Activated CD8-positive, alpha-beta memory T cell treated with anti-CD3 and anti-CD28 coated beads, Interleukin-2, amount 10 ng/mL, durations not matched to agents 7 days and 5 days (primary cell): ENCODE measurements at regions of chr1 and their contacts with region 1.

Region 1: GRCh38 chr1:22704440-22705067 is 6.1 kb upstream of the EPHB2 start:
- DNase-seq: peak; percentile 84
- ATAC-seq: peak; percentile 94
- H3K4me3 Mint-ChIP-seq: no peak overlapping the region
- H3K27ac Mint-ChIP-seq: no peak overlapping the region
- H3K4me1 Mint-ChIP-seq: peaks cover 9% of the 10 kb centered on the region
- H3K27me3 Mint-ChIP-seq: peaks cover 41% of the 10 kb centered on the region

Region 2: GRCh38 chr1:22861764-22862440 is 157.3 kb after region 1 on chr1:
- CTCF ChIA-PET with region 1: interaction called, 14 read pairs
- DNase-seq: no peak
- ATAC-seq: no peak
- H3K4me3 Mint-ChIP-seq: no peak overlapping the region
- H3K27ac Mint-ChIP-seq: no peak overlapping the region
- H3K4me1 Mint-ChIP-seq: no peaks in the 10 kb centered on the region
- H3K27me3 Mint-ChIP-seq: peaks cover 3% of the 10 kb centered on the region

Region 3: GRCh38 chr1:22889213-22889827 is 184.8 kb after region 1 on chr1:
- CTCF ChIA-PET with region 1: interaction called, 15 read pairs
- DNase-seq: no peak
- ATAC-seq: peak; percentile 40
- H3K4me3 Mint-ChIP-seq: no peak overlapping the region
- H3K27ac Mint-ChIP-seq: no peak overlapping the region
- H3K4me1 Mint-ChIP-seq: peaks cover 10% of the 10 kb centered on the region
- H3K27me3 Mint-ChIP-seq: peaks cover 8% of the 10 kb centered on the region

Region 4: DNA sequence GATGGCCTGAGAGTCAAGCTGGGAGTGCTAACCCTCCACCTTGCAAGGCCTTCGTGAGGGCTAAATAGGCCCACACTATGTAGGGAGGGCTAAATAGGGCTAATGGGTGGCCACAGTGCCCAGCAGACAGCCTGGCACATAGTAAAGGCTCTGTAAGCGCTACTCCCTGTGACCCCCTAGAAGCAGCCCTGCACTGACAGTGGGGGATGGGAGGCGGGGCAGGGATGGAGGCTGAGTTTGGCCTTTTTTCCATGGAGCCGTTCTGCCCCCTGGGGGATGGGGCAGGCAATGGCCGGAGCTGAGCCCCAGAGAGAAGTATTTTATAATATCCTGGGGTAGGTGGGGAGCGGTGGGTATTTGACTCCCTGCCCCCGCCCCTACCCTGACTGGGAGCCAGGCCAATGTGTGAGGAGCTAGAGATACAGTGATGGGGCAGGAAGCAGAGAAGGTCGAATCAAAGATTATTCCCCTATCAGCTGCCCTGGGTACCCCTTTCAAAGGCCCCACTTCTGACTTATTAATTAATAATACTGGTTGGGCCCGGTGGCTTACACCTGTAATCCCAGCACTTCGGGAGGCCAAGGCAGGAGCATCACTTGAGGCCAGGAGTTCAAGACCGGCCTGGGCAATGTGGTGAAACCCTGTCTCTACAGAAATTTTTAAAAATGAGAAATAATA is 225.8 kb after region 1 on chr1:
- CTCF ChIA-PET with region 1: interaction called, 19 read pairs
- DNase-seq: peak; percentile 48
- ATAC-seq: no peak
- H3K4me3 Mint-ChIP-seq: no peak overlapping the region
- H3K27ac Mint-ChIP-seq: no peak overlapping the region
- H3K4me1 Mint-ChIP-seq: no peaks in the 10 kb centered on the region
- H3K27me3 Mint-ChIP-seq: peaks cover 8% of the 10 kb centered on the region

Region 5: GRCh38 chr1:22963044-22963677 is 258.6 kb after region 1 on chr1:
- CTCF ChIA-PET with region 1: interaction called, 13 read pairs
- DNase-seq: no peak
- ATAC-seq: no peak
- H3K4me3 Mint-ChIP-seq: no peak overlapping the region
- H3K27ac Mint-ChIP-seq: no peak overlapping the region
- H3K4me1 Mint-ChIP-seq: no peaks in the 10 kb centered on the region
- H3K27me3 Mint-ChIP-seq: peaks cover 15% of the 10 kb centered on the region